Panc1 (cell line): ENCODE measurements at regions of chr15 and their contacts with region 1.

Region 1: DNA sequence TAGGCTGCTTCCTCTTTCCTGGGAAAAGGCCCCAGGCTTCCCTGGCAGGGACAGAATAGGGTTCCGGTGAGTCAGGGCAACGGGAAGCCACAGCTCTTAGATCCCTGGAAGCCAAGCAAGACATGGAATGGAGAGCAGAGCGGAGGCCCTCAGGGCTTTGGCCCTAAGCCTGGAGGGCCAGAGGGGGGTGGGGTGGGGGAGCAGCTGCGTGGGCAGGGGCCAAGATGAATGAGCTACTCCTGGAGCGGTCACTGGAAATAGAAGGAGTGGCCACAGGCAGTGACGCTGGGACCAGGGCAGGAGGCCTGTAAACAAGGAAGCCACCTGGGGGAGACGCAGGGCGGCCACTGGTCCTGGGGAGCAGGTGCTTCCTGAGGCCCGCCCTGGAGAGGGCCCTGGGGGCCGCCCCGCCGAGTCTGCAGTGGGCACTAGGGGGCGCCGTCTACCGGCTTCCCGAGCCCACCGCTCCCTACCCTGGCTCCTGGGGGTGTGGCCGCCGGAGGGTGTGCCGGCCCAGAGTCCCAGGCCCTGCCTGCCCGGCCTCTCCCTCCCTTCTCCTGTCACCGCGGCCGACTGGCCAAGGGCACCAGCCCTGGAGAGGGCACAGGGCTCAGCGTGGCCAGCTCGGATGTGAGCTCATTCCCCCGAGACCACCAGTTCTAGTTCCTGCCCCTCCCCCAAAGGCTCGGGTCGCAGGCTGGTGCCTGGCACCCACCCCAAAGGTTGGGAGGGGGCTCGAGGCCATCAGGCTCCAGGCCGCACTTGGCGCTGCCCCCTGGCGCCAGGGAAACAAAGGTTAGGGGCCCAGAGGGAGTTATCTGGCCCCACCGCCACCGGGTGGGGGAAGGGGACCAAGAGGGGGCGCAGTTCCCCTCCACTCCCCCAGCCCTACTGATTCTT is 12.1 kb downstream of the VPS18 start:
- DNase-seq: no peak
- ATAC-seq: peak; percentile 82
- H3K4me3 ChIP-seq: peak overlapping the region; percentile 41 to 63
- H3K27ac ChIP-seq: peak overlapping the region; percentile 83
- H3K4me1 ChIP-seq: peaks cover 24% of the 10 kb centered on the region
- H3K27me3 ChIP-seq: no peaks in the 10 kb centered on the region
- CTCF ChIP-seq: peak; percentile 92

Region 2: DNA sequence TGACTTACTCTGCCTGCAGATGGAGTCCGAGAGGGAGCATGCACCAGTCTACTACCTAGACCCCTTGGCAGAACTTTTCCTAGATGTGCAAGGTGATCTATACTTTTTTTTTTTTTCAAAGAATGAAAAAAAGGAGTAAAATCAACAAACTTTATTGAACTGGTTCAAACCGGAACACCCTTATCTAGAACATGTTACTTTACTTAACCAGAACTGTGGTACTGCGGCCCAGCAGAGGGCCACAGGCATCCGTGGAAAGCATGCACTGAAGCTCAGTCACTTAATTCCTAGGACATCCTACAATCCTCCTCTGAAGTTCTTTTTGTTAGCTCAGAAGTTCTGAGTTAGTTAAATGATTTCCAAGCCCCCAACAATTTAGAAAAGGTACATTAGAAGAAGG is 68.5 kb after region 1 on chr15:
- CTCF ChIA-PET with region 1: interaction called, 3 read pairs
- POLR2A ChIA-PET with region 1: interaction called, 12 read pairs
- in situ Hi-C with region 1: no loop called
- intact Hi-C with region 1: no loop called
- DNase-seq: no peak
- ATAC-seq: no peak
- H3K4me3 ChIP-seq: no peak overlapping the region
- H3K27ac ChIP-seq: no peak overlapping the region
- H3K4me1 ChIP-seq: no peaks in the 10 kb centered on the region
- H3K27me3 ChIP-seq: no peaks in the 10 kb centered on the region
- CTCF ChIP-seq: no peak

Region 3: DNA sequence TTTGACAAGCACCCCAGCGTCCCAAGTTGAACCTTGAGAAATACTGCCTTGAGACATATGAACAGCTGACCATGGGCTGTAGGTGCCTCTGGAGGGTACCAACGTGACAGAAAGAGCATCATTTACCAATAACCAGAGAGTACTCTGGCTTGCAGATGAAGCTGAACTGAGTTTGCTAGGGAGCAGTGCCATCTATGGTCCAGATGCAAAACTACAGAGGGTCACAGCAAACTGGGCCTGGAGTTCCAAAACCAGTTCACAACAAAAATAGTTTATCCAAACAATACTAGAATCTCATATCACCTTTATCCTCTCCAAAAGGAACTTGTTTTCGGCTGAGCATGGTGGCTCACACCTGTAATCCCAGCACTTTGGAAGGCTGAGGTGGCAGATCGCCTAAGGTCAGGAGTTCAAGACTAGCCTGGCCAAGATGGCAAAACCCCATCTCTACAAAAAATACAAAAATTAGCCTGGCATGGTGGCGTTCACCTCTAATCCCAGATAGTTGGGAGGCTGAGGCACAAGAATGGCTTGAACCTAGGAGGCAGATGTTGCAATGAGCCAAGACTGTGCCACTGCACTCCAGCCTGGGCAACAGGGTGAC is 116.2 kb after region 1 on chr15:
- CTCF ChIA-PET with region 1: interaction called, 3 read pairs
- POLR2A ChIA-PET with region 1: no interaction called
- in situ Hi-C with region 1: no loop called
- intact Hi-C with region 1: loop called (anchors 1 kb)
- DNase-seq: peak; percentile 56
- ATAC-seq: peak; percentile 89
- H3K4me3 ChIP-seq: no peak overlapping the region
- H3K27ac ChIP-seq: no peak overlapping the region
- H3K4me1 ChIP-seq: no peaks in the 10 kb centered on the region
- H3K27me3 ChIP-seq: no peaks in the 10 kb centered on the region
- CTCF ChIP-seq: peak; percentile 80

Region 4: DNA sequence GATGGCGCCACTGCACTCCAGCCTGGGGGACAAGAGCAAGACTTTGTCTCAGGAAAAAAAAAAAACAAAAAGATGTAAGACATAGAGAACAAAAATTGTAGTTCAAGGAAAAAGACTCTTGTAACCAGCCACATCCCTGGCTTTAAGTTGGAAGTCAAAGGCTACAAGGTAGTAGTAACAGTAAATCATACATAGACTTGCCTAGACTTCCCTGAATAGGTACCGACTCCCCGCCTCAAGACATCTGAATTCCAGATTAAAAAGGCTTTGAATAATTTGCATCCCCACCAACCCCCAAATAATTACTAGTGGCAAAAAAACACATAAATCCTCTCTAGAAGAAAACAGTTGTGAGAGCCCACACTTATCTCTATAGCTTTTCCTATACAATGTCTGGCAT is 154.2 kb after region 1 on chr15:
- CTCF ChIA-PET with region 1: no interaction called
- POLR2A ChIA-PET with region 1: no interaction called
- in situ Hi-C with region 1: no loop called
- intact Hi-C with region 1: no loop called
- DNase-seq: no peak
- ATAC-seq: no peak
- H3K4me3 ChIP-seq: no peak overlapping the region
- H3K27ac ChIP-seq: no peak overlapping the region
- H3K4me1 ChIP-seq: no peaks in the 10 kb centered on the region
- H3K27me3 ChIP-seq: no peaks in the 10 kb centered on the region
- CTCF ChIP-seq: no peak